Sigmoid colon (tissue), 7 donors: ENCODE measurements at regions of chr13 and their contacts with region 1.

Region 1: DNA sequence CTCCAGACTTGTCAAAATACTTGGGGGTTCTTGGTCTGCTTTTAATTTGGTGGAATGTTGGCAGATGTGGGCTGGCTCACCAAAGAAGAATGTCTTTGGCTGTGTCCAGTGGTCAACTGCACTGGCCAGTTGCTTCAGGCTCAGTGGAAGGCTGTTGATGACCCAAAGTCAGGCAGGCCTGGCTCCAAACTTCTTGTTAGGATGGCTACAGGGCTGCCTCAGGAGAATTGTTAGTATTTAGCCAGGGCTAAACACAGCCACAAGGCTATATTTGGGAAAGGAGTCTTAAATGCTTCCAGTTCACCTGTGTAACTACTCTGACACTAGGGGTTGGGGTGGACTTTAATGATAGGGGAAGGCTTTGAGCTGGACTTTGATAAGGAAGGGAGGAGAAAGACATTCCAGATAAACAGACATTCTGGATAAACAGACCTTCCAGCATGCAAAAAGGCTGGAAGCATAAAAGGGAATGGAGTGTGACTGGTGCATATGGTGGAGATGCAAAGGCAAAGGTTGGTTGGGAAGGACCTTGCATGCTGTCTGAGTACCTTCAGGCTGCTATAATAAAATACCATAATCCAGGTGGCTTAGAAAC is 116.8 kb downstream of the FOXO1 start:
- DNase-seq: peak; percentile 73
- H3K4me3 ChIP-seq: no peak overlapping the region
- H3K27ac ChIP-seq: no peak overlapping the region
- H3K4me1 ChIP-seq: peaks cover 0 to 11% (median 4%) of the 10 kb centered on the region in 4 donors
- H3K27me3 ChIP-seq: no peaks in the 10 kb centered on the region
- CTCF ChIP-seq: no peak
- EP300 ChIP-seq: no peak
- POLR2A ChIP-seq: no peak

Region 2: GRCh38 chr13:40377783-40378182 is 171.8 kb before region 1 on chr13:
- intact Hi-C with region 1: loop called (anchors 5 kb)
- DNase-seq: no peak
- H3K4me3 ChIP-seq: peak overlapping the region in 3 of 4 donors; percentile 11 to 25 (median 19)
- H3K27ac ChIP-seq: peak overlapping the region; percentile 45 to 63 (median 52)
- H3K4me1 ChIP-seq: peaks cover 0 to 17% (median 6%) of the 10 kb centered on the region in 4 donors
- H3K27me3 ChIP-seq: no peaks in the 10 kb centered on the region
- CTCF ChIP-seq: no peak
- EP300 ChIP-seq: no peak
- POLR2A ChIP-seq: peak in 1 of 2 donors; percentile 7

Region 3: GRCh38 chr13:40609972-40610726 is 60.6 kb after region 1 on chr13:
- intact Hi-C with region 1: no loop called
- DNase-seq: no peak
- H3K4me3 ChIP-seq: no peak overlapping the region
- H3K27ac ChIP-seq: peak overlapping the region in 1 of 4 donors; percentile 46
- H3K4me1 ChIP-seq: peaks cover 0 to 59% (median 50%) of the 10 kb centered on the region in 4 donors
- H3K27me3 ChIP-seq: no peaks in the 10 kb centered on the region
- CTCF ChIP-seq: no peak
- EP300 ChIP-seq: no peak
- POLR2A ChIP-seq: no peak